Posterior vena cava (tissue), 2 donors: ENCODE measurements at regions of chr1 and their contacts with region 1.

Region 1: DNA sequence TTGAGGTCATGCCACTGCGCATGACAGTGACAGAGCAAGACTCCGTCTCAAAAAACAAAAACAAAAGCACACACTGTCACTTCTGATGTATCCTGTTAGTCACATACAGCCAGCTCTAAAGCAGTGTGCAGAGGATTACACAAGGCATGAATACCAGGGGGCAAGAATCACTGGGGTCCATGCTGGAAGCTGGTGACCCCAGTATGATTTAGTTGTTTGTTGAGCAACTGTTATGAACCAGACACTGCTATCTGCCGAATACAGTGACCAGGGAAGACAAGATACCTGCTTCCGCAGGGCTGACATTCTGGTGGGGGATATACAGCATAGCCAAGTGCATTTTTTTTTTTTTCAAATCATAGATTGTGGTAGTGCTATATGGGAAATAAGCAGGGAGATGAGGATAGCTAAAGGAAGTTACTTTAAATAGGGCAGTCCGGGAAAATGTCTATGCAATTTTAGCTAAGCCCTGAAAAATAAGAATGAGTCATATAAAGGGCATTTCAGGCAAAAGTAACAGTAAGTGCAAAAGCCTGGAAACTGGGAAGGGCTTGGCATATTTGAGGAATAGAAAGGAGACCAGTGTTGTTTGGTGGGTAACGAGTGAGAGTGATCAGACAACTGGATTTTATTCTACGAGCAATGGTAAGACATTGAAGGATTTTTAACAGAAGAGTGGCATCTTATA is 69.7 kb downstream of the ADSS2 start:
- DNase-seq: no peak

Region 2: DNA sequence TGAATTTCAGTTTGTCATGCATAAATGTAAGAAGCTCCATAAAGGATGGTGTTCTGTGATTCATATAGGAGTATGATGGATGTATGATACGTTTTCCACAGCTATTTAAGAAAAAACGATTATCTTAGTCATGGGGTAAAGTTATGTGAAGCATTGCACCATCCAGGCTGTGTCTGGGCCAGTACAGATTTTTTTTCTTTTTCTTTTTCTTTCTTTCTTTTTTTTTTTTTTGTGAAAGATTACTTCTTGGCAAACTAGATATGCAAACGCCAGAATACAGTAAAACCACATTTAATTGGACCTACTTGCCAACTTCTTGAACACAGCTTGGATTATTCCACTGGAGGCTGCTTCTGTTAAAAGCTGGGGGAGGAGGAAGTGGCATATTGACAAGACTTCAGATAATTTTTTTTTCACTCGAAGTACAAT is 316.0 kb before region 1 on chr1:
- intact Hi-C with region 1: no loop called
- DNase-seq: no peak

Region 3: GRCh38 chr1:244361764-244362473 is 20.1 kb before region 1 on chr1:
- intact Hi-C with region 1: no loop called
- DNase-seq: no peak

Region 4: DNA sequence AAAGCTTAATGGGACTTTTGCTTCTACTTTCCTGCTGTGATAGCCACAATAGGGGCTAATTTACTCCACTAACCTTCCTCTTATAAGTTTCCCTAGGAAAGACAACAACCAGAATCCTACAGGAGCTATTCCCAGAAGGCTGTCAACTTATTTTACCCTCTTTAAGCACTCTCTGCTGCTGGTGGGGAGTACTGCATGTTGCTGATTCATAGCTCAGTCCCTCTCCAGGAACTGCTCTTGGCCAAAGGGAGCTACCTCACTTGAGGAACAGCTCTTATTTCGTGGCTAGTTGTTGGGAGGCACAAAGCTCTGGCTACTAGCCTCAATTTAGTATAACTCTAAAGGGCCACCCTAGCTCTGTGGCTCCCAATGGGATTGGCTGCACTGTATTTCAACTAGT is 32.5 kb after region 1 on chr1:
- intact Hi-C with region 1: loop called in 1 of 2 experiments (anchors 1 kb)
- DNase-seq: no peak